ENCODE measurements at regions of chr3 and their contacts with region 1.

Region 1: DNA sequence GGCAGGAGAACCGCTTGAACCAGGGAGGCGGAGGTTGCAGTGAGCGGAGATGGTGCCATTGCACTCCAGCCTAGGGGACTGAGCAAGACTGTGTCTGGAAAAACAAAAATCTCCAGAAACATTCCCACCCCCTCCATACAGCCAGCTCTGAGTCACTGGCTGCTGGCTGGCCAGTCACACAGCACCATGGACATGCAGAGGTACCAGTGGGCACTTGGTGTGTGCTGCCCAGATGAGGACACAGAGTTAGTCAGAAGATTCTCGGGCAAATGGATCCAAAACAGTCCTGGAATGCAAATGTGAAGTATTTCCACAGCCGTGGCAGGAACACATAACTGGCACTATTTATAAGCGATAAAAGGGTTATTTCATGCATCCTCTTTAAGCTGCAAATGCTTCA is 44.6 kb downstream of the BDH1 start:
- DNase-seq: peak; percentile 44
- ATAC-seq: peak; percentile 66
- H3K4me3 ChIP-seq: no peak overlapping the region
- H3K27ac ChIP-seq: no peak overlapping the region
- H3K4me1 ChIP-seq: peaks cover 34% of the 10 kb centered on the region
- H3K27me3 ChIP-seq: no peaks in the 10 kb centered on the region
- CTCF ChIP-seq: no peak

Region 2: GRCh38 chr3:197224034-197224444 is 287.1 kb before region 1 on chr3:
- CTCF ChIA-PET with region 1: no interaction called
- POLR2A ChIA-PET with region 1: no interaction called
- intact Hi-C with region 1: loop called (anchors 1 kb)
- DNase-seq: peak; percentile 81
- ATAC-seq: peak; percentile 90
- H3K4me3 ChIP-seq: no peak overlapping the region
- H3K27ac ChIP-seq: no peak overlapping the region
- H3K4me1 ChIP-seq: no peaks in the 10 kb centered on the region
- H3K27me3 ChIP-seq: no peaks in the 10 kb centered on the region
- CTCF ChIP-seq: peak; percentile 83

Region 3: DNA sequence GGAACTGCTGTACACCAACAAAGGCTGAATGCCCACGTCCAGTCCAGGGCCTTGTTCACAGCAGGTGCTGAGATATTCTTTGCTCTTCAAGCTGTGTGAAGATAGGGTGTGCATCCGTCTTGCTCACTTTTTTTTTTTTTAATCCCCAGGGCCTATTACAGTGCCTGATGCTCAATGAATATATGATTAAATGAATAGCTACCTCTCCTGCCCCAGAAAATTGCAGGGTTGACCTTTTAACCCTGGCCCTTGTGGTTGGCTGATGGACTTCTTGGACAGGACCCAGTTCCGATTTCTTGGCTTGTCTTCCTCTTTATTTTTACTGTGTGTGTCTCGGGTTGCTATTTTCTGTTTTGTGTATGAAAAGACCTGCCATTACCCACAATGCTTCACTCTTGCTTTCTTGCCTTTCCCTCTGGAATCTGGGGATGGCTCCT is 235.7 kb after region 1 on chr3:
- CTCF ChIA-PET with region 1: no interaction called
- POLR2A ChIA-PET with region 1: no interaction called
- intact Hi-C with region 1: no loop called
- DNase-seq: no peak
- ATAC-seq: no peak
- H3K4me3 ChIP-seq: no peak overlapping the region
- H3K27ac ChIP-seq: no peak overlapping the region
- H3K4me1 ChIP-seq: peaks cover 6% of the 10 kb centered on the region
- H3K27me3 ChIP-seq: no peaks in the 10 kb centered on the region
- CTCF ChIP-seq: no peak

Measured in PC-3 (cell line).